AG04450 (cell line): ENCODE measurements at regions of chr5 and their contacts with region 1.

Region 1: DNA sequence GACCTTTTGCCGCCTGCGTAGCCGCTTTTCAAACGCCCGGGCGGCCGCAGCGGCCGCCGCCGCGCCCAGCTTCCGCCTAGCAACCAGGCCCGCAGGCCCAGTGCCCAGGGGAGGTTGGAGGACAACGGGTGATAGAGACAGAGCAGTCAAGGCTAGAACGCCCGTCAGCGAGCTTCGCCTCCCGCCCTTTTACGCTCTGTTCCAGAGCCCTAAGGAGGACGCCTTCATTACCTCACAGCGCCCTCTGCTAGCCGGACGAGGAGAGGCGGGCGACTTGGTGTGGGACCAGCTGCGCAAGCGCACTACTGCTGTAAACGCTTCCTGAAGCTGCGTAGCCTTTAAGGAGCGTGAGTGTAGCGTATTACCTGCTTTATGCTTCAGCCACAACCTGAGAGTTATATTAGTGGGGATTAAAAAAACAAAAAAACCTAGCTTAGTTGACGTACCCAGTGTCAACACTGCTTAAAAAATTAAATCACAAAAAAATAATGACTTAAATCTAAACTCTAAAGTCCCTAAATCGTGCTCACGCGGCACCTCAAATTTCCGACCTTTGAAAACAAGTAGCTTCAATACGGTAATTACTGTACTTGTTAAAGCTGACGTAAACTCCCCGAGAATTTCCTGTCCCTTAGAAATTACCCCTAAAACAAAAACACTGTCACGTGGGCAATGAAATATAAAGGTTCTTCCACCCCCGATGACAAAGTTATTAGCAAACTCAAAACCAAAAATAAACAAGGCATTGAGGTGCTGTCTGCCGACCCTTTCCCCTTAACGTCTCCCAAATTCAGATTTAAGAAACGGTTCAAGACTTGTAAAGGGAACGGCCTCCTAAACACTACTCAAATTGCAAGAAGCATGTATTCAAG is at the start of gene CEP120:
- DNase-seq: peak; percentile 99
- H3K4me3 ChIP-seq: peak within 1 kb of the TSS; percentile 82
- H3K27ac ChIP-seq: peak within 1 kb of the TSS; percentile 72
- H3K27me3 ChIP-seq: no peaks in the 10 kb centered on the region
- CTCF ChIP-seq: peak; percentile 80
- polyA plus RNA-seq, gene CEP120: 20.0 and 27.2 TPM in 2 replicates

Region 2: GRCh38 chr5:123371575-123372179 is 51.8 kb before region 1 on chr5:
- CTCF ChIA-PET with region 1: interaction called, 12 read pairs
- POLR2A ChIA-PET with region 1: no interaction called
- DNase-seq: no peak
- H3K4me3 ChIP-seq: no peak overlapping the region
- H3K27ac ChIP-seq: no peak overlapping the region
- H3K27me3 ChIP-seq: no peaks in the 10 kb centered on the region
- CTCF ChIP-seq: peak; percentile 56

Region 3: DNA sequence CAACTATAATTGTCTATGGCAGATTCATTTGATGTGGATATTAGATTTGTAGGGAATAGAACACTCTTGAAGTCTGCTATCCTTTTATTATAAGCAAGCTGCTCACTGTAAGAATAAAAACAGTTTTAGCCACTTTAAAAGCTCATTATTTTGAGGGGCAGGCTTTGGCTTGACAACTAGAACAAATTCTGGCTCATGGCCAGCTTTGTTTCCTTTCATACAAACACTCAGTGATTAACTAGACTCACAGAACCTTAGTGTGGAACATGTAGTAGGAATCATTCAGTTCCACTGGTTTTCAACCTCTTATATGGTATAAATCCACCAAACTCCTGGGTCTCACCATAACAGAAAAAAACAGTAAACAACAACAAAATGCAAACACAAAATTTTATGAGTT is 27.1 kb after region 1 on chr5:
- CTCF ChIA-PET with region 1: interaction called, 10 read pairs
- POLR2A ChIA-PET with region 1: no interaction called
- DNase-seq: no peak
- H3K4me3 ChIP-seq: no peak overlapping the region
- H3K27ac ChIP-seq: no peak overlapping the region
- H3K27me3 ChIP-seq: no peaks in the 10 kb centered on the region
- CTCF ChIP-seq: no peak

Region 4: DNA sequence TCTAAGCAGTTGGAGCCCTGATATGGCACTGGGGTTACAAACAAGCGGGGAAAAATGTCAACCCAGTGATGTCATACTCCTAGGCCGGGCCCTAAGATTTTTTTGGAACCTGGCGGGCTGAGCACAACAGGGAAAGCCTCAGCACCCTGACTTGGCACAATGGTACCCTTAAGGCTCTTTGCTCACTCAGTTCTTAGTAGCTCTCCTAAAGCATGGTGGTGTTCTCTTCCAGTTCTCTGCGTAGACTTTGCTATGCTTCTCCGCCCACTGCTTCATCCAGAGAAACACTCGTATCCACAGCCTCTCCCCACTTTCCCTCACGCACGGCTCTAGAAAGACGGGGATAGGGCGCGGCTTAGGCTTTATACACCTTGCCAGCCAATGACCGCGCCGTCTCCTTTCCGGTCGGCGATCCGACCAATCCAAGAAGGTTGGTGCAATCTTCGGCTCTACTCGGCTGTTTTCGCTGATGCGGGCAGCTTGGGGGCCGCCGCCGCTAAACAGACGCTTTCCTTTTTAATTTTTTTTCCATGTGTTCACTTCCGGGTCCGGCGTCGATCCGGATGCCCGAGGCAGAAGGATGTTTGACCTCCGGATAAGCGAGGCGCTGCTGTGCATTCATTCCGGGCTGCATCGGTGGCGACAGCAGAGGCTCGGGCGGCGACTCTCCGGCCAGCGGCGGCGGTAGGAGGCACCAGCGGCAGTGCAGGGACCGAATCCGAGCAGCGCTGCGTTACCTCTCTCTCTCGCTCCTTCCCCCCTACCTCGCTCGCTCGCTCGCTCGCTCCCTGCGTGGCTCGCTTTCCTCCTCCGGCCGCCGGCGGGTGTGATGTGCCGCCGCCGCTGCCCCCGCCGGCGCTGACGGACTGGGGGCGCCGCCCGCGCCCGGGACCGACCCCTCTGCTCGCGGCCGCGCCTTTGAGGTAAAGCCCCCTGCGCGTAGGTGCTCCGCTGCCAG is 88.4 kb after region 1 on chr5 and contains the start of gene CSNK1G3:
- CTCF ChIA-PET with region 1: interaction called, 15 read pairs
- POLR2A ChIA-PET with region 1: interaction called, 26 read pairs
- DNase-seq: peak; percentile 95
- H3K4me3 ChIP-seq: peak within 1 kb of the TSS; percentile 85
- H3K27ac ChIP-seq: peak within 1 kb of the TSS; percentile 88
- H3K27me3 ChIP-seq: no peaks in the 10 kb centered on the region
- CTCF ChIP-seq: no peak
- polyA plus RNA-seq, gene CSNK1G3: 28.5 and 40.9 TPM in 2 replicates

Region 5: GRCh38 chr5:123610665-123611405 is 187.3 kb after region 1 on chr5:
- CTCF ChIA-PET with region 1: interaction called, 82 read pairs
- POLR2A ChIA-PET with region 1: interaction called, 10 read pairs
- DNase-seq: peak; percentile 36
- H3K4me3 ChIP-seq: no peak overlapping the region
- H3K27ac ChIP-seq: no peak overlapping the region
- H3K27me3 ChIP-seq: no peaks in the 10 kb centered on the region
- CTCF ChIP-seq: peak; percentile 99

Region 6: GRCh38 chr5:123671042-123671441 is 247.5 kb after region 1 on chr5:
- CTCF ChIA-PET with region 1: no interaction called
- POLR2A ChIA-PET with region 1: no interaction called
- DNase-seq: peak; percentile 7
- H3K4me3 ChIP-seq: no peak overlapping the region
- H3K27ac ChIP-seq: no peak overlapping the region
- H3K27me3 ChIP-seq: no peaks in the 10 kb centered on the region
- CTCF ChIP-seq: peak; percentile 88